ENCODE measurements at regions of chr6 and their contacts with region 1.

Region 1: DNA sequence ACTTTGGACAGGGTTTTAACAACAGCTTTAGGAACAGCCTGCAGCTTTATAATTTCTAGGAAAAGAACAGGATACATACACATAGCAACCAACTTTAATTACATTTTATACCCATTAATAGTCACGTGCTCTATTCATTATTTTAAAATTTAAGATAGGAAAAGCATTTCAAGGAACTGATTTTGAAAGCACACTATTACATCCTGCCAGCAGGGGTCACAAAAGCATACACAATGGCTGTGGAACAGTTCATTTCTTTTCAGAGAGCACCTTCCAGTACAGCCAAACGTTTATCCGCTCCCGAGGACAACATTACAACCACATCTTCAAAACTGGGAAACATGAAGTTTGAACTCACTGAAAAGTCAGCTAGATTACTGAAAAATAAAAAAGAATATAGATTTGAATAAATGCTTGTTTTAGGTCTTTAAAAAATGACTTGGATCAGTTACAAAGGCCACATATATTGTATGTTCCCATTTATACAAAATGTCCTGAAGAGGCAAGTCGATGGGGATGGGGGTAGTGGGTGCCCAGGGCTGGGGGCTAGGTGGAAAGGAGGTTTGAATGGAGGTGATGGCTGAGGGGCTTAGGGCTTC is 104.6 kb upstream of the EXOC2 start:
- DNase-seq: no peak
- H3K4me3 ChIP-seq: no peak overlapping the region
- CTCF ChIP-seq: peak; percentile 62

Region 2: DNA sequence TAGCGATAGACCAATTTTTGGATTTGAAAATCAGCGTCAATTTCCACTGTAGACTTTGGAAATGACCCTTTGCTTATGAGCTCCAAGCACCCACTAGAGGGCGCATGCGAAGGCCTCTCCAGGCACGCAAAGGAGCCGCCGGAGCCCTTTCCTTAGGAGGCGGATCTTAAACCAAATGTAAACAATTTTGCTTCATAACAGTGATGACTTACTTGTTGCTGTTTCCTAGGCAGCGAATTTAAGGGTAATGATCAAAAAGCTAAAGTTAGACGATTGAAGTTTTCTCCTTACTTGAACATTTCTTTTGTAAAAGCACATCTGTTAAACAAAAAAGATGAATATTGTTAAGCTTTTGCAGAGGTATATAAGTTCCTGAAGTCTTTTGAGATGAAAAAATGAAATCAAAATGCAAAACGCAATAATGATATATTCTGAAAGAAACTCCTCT is 75.5 kb before region 1 on chr6:
- CTCF ChIA-PET with region 1: interaction called, 10 read pairs
- POLR2A ChIA-PET with region 1: no interaction called
- DNase-seq: peak; percentile 29
- H3K4me3 ChIP-seq: no peak overlapping the region
- CTCF ChIP-seq: peak; percentile 89

Region 3: DNA sequence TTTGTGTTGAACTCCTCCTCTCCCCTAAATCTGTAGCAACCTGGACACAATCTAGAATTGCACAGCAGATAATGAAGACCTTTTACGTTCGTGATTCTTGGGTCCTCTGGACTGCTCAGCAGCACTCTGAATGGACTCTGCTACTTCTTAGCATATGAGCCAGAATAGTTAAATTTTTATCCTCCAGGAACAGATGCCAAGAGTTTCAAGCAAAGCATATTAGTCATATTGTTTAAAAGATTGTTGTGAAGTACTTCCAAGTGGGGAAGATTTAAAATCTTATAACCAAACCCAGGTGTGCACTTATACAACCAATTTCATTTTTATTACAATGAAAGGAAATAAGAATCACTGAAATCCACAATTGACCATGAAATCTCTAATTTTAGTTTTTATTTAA is 14.3 kb after region 1 on chr6:
- CTCF ChIA-PET with region 1: interaction called, 10 read pairs
- POLR2A ChIA-PET with region 1: no interaction called
- DNase-seq: no peak
- H3K4me3 ChIP-seq: no peak overlapping the region
- CTCF ChIP-seq: no peak

Region 4: GRCh38 chr6:1179571-1180459 is 382.2 kb after region 1 on chr6:
- CTCF ChIA-PET with region 1: no interaction called
- POLR2A ChIA-PET with region 1: no interaction called
- DNase-seq: no peak
- H3K4me3 ChIP-seq: no peak overlapping the region
- CTCF ChIP-seq: no peak

Region 5: GRCh38 chr6:1387876-1388629 is 590.5 kb after region 1 on chr6:
- CTCF ChIA-PET with region 1: interaction called, 22 read pairs
- POLR2A ChIA-PET with region 1: no interaction called
- DNase-seq: no peak
- H3K4me3 ChIP-seq: no peak overlapping the region
- CTCF ChIP-seq: no peak

Region 6: DNA sequence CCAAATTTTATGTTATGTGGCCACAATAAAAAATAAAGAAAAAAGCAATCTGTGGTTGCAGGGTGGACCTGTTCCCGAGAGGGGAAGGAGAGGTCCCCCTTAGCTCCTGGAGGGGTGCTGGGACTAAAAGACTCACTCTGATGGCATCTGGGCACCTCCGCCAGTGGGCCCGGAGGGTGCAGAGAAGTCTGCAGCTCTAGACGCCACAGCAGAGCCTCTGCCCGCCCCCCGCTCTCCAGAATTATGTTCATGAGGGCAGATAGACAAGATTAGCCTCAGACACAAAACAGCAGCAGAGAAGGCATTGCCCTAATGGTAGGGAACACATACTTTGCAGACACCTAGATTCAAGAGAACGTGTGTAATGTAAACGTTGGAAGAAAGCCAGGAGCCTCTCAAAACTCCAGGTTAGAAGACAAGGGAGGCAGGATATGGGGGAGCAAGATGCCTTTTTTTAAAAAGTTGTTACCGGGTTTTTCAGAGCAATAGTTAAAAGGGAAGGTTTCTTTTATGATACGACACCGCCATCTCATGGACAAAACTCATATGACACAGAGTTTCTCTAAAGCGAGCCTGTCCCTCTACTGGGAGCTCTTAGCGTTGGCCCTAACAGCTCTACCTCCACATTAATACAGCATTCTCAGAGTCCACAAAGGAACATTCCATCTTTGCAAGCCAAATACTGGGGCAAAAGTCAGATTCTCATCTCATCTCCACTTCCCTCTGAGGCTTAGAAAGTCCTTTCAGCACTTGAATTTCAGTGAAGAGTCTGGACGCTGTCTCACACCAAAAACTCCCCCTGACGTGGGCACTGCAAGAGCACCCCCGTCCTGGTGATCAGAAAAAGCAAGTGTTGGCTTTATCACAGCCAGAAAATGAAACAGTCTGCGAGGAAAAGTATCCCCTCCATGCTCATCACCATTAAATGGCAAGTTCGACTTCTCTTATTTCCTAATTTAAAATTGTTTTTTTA is 639.0 kb after region 1 on chr6:
- CTCF ChIA-PET with region 1: interaction called, 32 read pairs
- POLR2A ChIA-PET with region 1: no interaction called
- DNase-seq: peak; percentile 5
- H3K4me3 ChIP-seq: no peak overlapping the region
- CTCF ChIP-seq: peak; percentile 69